Activated CD8-positive, alpha-beta T cell treated with anti-CD3 and anti-CD28 coated beads for 36 hours (primary cell): ENCODE measurements at regions of chr20 and their contacts with region 1.

Region 1: DNA sequence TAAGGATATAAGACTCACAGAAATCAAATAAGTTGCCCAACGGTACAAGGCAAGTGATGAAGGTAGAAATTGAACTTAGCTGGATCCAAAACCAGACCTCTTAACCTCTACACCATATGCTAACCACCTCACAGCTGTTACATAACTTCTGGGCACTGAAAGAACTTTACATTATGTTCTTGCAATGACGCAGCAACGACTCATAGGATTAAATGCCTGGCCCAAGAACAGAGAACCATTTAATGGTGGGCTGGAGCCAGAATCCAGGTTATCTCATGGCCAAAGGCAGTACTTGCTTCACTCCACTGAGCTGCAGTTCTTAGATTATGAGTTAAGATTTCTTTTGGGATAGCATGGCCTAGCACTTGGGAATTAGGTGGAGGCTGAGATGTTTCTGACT is 4.4 kb downstream of the TRMT6 start:
- DNase-seq: peak; percentile 8
- ATAC-seq: no peak
- H3K4me3 Mint-ChIP-seq: no peak overlapping the region
- H3K27ac Mint-ChIP-seq: no peak overlapping the region
- H3K4me1 Mint-ChIP-seq: peaks cover 44% of the 10 kb centered on the region
- H3K27me3 Mint-ChIP-seq: peaks cover 2% of the 10 kb centered on the region
- CTCF ChIP-seq: no peak

Region 2: DNA sequence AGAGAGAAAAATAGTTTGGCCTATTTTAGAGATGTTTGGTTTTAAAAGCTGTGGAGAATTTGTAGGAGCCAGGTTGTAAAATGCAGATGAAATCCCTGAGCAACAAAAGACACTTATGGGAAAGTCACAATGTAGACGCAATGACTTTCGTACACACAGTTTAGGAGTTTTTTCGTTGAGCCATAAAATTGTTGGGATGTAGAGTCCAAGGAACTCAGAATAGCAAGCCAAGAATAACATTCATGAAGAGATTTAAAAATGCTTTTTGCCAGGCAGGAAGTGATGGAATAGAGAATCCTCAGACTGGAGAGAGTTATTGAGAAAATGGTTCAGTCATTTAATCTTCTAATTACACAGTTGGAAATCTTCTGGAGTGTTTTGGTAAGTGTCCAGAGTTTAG is 617.7 kb before region 1 on chr20:
- CTCF ChIA-PET with region 1: no interaction called
- POLR2A ChIA-PET with region 1: no interaction called
- intact Hi-C with region 1: no loop called
- DNase-seq: no peak
- ATAC-seq: no peak
- H3K4me3 Mint-ChIP-seq: no peak overlapping the region
- H3K27ac Mint-ChIP-seq: no peak overlapping the region
- H3K4me1 Mint-ChIP-seq: no peaks in the 10 kb centered on the region
- H3K27me3 Mint-ChIP-seq: peaks cover 15% of the 10 kb centered on the region
- CTCF ChIP-seq: no peak

Region 3: GRCh38 chr20:5608442-5609161 is 337.4 kb before region 1 on chr20:
- CTCF ChIA-PET with region 1: no interaction called
- POLR2A ChIA-PET with region 1: interaction called, 3 read pairs
- intact Hi-C with region 1: loop called (anchors 10 kb)
- DNase-seq: no peak
- ATAC-seq: no peak
- H3K4me3 Mint-ChIP-seq: peak overlapping the region; percentile 96
- H3K27ac Mint-ChIP-seq: peak overlapping the region; percentile 99
- H3K4me1 Mint-ChIP-seq: peaks cover 51% of the 10 kb centered on the region
- H3K27me3 Mint-ChIP-seq: no peaks in the 10 kb centered on the region
- CTCF ChIP-seq: no peak

Region 4: DNA sequence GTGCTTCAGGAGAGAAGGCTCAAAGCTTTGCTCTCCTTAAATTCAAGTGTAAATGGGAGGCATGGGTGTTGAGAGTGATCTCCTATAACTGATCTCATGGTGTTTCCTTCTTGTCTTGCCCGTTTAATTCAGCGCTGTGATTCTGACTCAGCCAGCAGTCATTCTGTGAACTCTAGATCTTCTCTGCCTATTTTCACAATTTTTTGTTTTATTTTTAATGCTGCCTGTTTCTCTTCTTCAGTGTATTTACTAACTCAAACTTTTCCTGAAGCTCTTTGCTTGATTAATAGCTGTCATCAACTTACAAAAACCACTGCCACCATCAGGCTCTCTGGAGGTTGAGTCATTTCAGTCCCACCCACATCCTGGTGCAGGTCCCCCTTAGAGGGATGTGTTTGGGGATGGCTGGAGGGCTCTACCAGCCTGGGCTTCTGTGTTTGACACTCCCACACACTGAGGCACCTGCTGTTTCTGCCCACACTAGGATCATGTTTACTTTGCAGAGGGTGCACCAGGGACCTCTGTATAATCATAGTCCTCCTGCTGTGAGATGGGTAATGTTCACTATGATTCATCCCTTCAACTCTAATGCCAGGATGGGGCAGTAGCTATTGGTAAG is 101.8 kb before region 1 on chr20:
- CTCF ChIA-PET with region 1: no interaction called
- POLR2A ChIA-PET with region 1: no interaction called
- intact Hi-C with region 1: loop called (anchors 5 kb)
- DNase-seq: peak; percentile 92
- ATAC-seq: peak; percentile 98
- H3K4me3 Mint-ChIP-seq: no peak overlapping the region
- H3K27ac Mint-ChIP-seq: peak overlapping the region; percentile 62
- H3K4me1 Mint-ChIP-seq: peaks cover 46% of the 10 kb centered on the region
- H3K27me3 Mint-ChIP-seq: no peaks in the 10 kb centered on the region
- CTCF ChIP-seq: no peak